Esophagus muscularis mucosa (tissue), 4 donors: ENCODE measurements at regions of chr2 and their contacts with region 1.

Region 1: DNA sequence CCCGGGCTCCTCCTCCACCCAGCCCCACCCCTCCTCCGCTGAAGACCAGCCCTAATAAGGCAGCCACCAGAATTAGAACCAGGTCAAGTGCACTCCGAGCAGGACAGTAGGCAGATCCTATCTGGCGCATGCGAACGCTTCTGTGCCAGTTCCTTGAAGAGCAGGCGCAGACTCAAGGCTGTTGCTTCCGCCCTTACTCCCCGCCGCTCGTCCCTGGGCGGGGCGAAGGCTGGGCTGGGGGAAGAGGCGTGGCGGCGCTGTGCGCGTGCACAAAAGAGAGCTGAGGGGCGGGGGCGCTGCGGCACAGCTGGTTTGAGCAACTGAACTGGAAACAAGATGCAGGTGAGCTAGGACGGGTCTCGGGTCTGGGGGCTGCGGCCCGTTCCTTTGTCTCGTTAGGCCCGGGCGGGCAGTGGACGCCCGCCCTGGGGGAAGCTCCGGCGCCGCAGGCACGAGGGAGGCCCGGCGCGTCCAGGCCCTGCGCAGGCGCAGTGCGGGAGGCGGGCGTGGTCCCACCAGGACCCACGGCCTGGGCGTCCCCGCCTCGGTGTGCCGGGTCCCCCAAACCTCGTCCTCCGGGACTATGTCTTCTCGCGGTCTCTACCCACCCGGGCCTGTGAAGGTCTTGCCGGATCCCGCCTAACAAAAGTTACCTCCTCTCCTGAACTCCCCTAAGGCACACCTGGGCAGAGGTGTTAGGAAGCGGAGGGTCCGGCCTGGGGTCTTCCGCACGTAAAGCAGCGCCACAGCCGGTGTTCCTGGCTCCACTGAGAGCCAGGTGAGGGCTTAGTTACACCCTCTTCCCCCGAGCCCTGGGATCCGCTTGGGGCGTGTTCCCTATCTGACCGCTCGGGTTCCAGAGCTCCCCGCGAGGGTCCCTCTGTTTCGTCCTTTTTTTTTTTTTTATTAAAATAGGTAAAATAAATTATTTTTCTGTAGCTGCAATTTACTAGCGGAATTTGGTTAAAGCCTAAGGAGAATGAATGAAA is at the start of gene PDCL3:
- DNase-seq: peak; percentile 98
- H3K4me3 ChIP-seq: peak within 1 kb of the TSS; percentile 82 to 91 (median 86)
- H3K27ac ChIP-seq: peak within 1 kb of the TSS; percentile 89 to 92 (median 90)
- H3K4me1 ChIP-seq: peaks cover 13 to 69% (median 62%) of the 10 kb centered on the region in 4 donors
- H3K27me3 ChIP-seq: no peaks in the 10 kb centered on the region
- CTCF ChIP-seq: peak; percentile 8 to 18 (median 9)
- EP300 ChIP-seq: no peak
- POLR2A ChIP-seq: peak; percentile 16
- total RNA-seq, gene PDCL3: 46.3 to 82.6 (median 61.3) TPM

Region 2: GRCh38 chr2:99754210-99754609 is 808.8 kb before region 1 on chr2:
- intact Hi-C with region 1: no loop called
- DNase-seq: no peak
- H3K4me3 ChIP-seq: no peak overlapping the region
- H3K27ac ChIP-seq: no peak overlapping the region
- H3K4me1 ChIP-seq: no peaks in the 10 kb centered on the region
- H3K27me3 ChIP-seq: no peaks in the 10 kb centered on the region
- CTCF ChIP-seq: no peak
- EP300 ChIP-seq: no peak
- POLR2A ChIP-seq: no peak

Region 3: DNA sequence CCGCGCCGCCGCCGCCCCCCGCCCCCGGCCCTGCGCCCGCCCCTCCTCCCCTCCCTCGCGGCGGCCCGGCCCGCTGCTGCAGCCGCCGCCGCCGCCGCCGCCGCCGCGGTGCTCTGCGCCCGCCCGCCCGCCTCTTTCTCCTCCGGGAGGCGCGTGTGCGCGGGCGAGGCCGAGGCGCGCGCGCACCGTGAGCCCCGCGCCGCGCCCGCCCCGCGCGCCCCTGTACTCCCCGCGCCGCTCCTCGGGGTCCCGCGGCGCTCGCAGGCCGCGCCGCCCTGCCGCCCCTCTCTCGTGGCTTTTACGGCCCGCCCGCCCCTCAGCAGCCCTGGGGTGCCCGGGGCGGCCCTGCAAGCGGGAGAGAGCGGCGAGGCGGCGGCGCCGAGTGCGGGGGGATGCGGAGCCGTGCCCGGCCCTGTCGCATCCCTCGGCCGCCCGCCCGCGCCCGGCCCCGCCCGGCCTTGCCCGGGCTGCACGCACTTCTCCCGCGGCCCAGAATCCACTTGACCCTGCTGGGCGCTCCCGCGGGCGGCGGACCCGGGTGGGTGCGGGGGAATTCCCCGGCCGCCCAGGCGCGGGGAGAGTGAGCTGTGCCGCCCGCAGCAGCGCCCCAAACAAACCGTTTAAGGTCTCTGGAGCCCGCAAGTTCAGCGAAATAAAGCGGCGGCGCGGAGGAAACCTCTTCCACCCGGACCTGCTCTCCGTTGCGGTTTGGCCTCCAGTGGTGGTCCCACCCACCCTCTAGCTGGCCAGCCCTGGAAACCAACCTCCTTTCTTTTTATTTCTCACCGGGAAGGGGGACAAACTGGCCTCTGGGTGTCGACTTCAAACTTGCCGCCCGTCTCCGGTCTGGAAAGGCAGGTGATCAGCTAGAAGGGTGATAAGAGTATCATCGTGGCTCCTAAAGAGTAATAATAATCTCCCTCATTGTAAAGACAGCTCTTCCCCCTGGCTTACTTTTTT is 458.0 kb before region 1 on chr2:
- intact Hi-C with region 1: no loop called
- DNase-seq: peak; percentile 85
- H3K4me3 ChIP-seq: peak overlapping the region; percentile 67 to 83 (median 76)
- H3K27ac ChIP-seq: peak overlapping the region; percentile 82 to 87 (median 86)
- H3K4me1 ChIP-seq: peaks cover 6 to 37% (median 26%) of the 10 kb centered on the region in 4 donors
- H3K27me3 ChIP-seq: peaks cover 0 to 3% (median 0%) of the 10 kb centered on the region in 4 donors
- CTCF ChIP-seq: no peak
- EP300 ChIP-seq: no peak
- POLR2A ChIP-seq: no peak

Region 4: GRCh38 chr2:100422320-100423055 is 140.5 kb before region 1 on chr2:
- intact Hi-C with region 1: loop called (anchors 5 kb)
- DNase-seq: peak; percentile 66
- H3K4me3 ChIP-seq: no peak overlapping the region
- H3K27ac ChIP-seq: no peak overlapping the region
- H3K4me1 ChIP-seq: peaks cover 0 to 21% (median 18%) of the 10 kb centered on the region in 4 donors
- H3K27me3 ChIP-seq: no peaks in the 10 kb centered on the region
- CTCF ChIP-seq: peak; percentile 35 to 61 (median 46)
- EP300 ChIP-seq: no peak
- POLR2A ChIP-seq: no peak

Region 5: DNA sequence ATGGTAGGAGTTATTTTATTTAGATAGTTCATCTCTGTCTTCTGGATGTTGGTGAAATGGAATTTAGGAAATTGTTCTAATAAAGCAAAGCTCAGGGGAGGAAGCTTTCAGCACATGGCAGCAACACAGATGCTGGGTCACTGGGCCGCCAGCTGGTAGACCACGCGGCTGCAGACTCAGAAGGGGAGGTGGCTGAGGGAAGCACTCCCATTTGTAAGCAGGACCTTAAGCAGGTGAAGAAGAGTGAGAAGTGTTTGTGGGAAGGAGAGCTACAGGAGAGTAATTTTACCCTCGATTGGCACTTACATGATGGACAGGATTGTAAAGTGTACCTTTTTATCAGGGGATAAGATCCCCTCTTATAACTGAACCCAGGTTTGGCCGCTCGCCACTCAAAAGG is 68.3 kb before region 1 on chr2:
- intact Hi-C with region 1: no loop called
- DNase-seq: peak; percentile 37
- H3K4me3 ChIP-seq: no peak overlapping the region
- H3K27ac ChIP-seq: no peak overlapping the region
- H3K4me1 ChIP-seq: no peaks in the 10 kb centered on the region
- H3K27me3 ChIP-seq: peaks cover 0 to 5% (median 0%) of the 10 kb centered on the region in 4 donors
- CTCF ChIP-seq: no peak
- EP300 ChIP-seq: no peak
- POLR2A ChIP-seq: no peak

Region 6: GRCh38 chr2:100742277-100743254 is 179.5 kb after region 1 on chr2:
- intact Hi-C with region 1: no loop called
- DNase-seq: peak; percentile 91
- H3K4me3 ChIP-seq: no peak overlapping the region
- H3K27ac ChIP-seq: peak overlapping the region; percentile 54 to 67 (median 60)
- H3K4me1 ChIP-seq: peaks cover 0 to 20% (median 16%) of the 10 kb centered on the region in 4 donors
- H3K27me3 ChIP-seq: no peaks in the 10 kb centered on the region
- CTCF ChIP-seq: no peak
- EP300 ChIP-seq: no peak
- POLR2A ChIP-seq: no peak